H1 (cell line): ENCODE measurements at regions of chr1 and their contacts with region 1.

Region 1: DNA sequence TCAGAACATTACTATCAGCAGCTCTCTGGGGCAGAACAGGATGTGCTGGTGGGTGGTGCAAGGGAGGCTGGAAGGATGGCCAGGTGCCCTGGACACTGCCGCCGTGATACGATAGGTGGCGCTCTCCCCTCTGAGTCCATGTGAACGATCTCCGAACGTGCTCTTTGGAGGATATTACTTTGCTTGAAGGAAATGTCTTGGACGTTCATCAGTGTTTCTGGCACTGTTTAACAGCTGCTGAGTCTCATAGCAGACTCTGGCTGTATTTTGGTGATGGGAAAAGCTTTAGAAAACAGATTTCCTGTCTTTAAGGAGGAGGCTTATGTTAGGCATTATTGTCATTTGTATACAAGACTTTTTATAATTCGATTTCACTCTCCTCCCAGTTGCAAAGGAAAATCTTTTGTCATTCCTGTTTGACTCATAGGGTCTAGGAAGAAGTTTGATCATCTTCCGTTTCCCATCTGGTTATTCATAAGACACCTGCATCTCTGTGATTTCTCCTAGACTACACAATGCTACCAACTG is 386.2 kb upstream of the ADGRL2 start:
- DNase-seq: peak; percentile 57 to 96
- H3K4me3 ChIP-seq: no peak overlapping the region
- H3K27ac ChIP-seq: no peak overlapping the region; the same call in 1 of the 2 replicates
- H3K4me1 ChIP-seq: peaks cover 0 to 14% (median 6%) of the 10 kb centered on the region in 4 experiments; a peak in 4 of 7 replicates
- H3K27me3 ChIP-seq: no peaks in the 10 kb centered on the region
- CTCF ChIP-seq: peak; percentile 80 to 99 (median 99)
- EP300 ChIP-seq: no peak
- POLR2A ChIP-seq: no peak
- RAD21 ChIP-seq: peak; percentile 88 to 93

Region 2: GRCh38 chr1:81391125-81391828 is 23.3 kb before region 1 on chr1:
- CTCF ChIA-PET with region 1: interaction called, 11 read pairs
- POLR2A ChIA-PET with region 1: no interaction called
- DNase-seq: no peak
- H3K4me3 ChIP-seq: no peak overlapping the region
- H3K27ac ChIP-seq: no peak overlapping the region
- H3K4me1 ChIP-seq: no peaks in the 10 kb centered on the region
- H3K27me3 ChIP-seq: no peaks in the 10 kb centered on the region
- CTCF ChIP-seq: no peak
- EP300 ChIP-seq: no peak
- POLR2A ChIP-seq: no peak
- RAD21 ChIP-seq: no peak

Region 3: DNA sequence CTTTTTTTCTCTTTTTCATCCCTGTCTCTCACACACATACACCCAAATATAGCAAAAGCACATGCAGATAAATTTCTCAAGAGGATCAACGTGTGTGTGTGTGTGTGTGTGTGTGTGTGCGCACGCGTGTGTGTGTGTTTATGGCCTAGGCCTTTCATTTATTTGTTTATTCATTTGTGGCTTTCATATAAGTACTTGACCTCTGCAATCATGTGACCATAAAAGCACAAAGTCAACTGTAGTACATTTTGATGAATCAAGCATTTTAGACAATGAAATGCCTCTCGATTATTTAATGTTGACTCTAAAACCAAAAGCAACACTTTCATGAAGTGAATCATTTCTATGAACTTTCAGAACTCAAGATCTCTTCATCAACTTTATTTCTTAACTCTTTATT is 192.1 kb after region 1 on chr1:
- CTCF ChIA-PET with region 1: no interaction called
- POLR2A ChIA-PET with region 1: no interaction called
- DNase-seq: no peak
- H3K4me3 ChIP-seq: no peak overlapping the region
- H3K27ac ChIP-seq: no peak overlapping the region
- H3K4me1 ChIP-seq: peaks cover 2 to 10% (median 5%) of the 10 kb centered on the region in 4 experiments; a peak in 6 of 7 replicates
- H3K27me3 ChIP-seq: peaks cover 2 to 11% (median 5%) of the 10 kb centered on the region in 4 experiments; a peak in 5 of 7 replicates
- CTCF ChIP-seq: no peak
- EP300 ChIP-seq: no peak
- POLR2A ChIP-seq: no peak
- RAD21 ChIP-seq: no peak